ENCODE measurements at regions of chr10 and their contacts with region 1.

Region 1: DNA sequence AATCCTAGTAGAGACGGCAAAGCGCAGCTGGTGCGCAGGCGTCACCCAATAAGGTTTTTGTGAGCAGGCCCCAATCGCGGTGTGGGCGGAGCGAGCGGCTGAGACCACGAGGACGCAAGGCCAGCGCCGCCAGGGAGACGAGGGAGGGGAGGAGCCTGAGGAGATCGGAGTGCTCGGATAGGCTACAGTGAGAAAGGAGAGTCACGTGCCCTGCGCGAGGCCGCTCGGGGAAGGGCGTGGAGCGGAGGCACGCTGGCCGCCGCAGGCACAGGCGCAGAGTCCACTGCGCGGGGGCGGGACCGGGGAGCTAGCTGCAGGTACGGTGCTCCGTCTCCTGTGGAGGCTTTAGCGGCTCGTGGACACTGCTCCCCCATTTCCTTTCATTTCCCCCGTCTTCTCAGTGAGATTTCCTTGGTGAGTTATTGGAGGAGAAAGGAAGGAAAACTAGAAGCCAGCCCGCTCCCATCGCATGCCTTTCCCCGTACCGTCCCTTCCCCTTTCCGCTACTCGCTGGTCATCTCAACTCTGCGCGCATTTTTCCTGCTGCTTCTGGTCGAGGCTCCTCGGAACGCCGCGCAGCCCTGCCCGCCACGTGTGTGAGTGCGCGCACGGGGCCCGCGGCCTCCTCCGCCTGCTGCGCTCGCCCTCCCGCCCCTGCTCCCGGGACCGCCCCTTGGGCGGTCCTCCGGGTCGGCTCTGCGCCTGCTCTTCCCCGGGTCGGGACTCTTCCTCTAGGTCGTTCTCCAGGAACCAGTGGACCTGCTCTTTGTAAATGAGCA is at the start of gene THNSL1:
- DNase-seq: peak; percentile 99
- H3K4me3 Mint-ChIP-seq: peak within 1 kb of the TSS; percentile 88
- H3K27ac Mint-ChIP-seq: peak within 1 kb of the TSS; percentile 98
- H3K4me1 Mint-ChIP-seq: peaks cover 16% of the 10 kb centered on the region
- H3K27me3 Mint-ChIP-seq: peaks cover 12% of the 10 kb centered on the region
- total RNA-seq, gene THNSL1: 3.6 and 4.2 TPM in 2 replicates

Region 2: DNA sequence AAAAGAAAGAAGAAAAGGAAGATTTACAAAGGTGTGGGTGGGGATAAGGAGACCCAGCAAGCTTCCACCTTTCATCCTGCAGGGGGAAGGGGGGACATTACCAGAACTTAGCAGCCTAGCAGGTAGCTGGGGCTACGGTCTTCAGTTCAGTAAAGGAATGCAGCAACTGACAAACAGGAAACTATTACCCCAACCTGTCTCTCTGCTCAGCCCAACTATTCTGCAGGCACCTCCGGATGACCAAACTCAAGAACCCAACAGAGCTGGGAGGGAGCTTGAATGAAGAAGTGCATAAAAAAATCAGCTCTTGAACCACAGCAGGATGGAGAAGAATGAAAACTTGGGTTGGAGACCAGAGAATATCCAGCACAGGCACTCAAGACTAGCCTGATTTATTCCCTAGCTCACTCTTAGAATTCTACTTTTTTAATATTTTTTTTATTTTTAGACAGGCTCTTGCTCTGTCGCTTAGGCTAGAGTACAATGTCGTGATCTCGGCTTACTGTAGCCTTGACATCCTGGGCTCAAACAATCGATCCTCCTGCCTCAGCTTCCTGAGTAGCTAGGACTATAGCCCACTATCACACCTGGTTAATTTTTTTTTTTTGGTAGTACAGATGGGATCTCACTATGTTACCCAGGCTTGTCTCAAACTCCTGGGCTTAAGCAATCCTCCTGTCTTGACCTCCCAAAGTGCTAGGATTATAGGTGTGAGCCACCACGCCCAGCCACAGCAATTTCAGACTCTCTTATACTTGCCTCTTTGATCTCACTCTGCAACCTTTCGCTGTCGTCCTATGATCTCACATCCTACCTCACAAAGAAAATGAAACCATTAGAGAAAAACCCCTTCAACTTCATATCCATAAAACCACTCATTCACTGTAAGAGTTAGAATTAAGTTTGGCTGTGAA is 1653.4 kb before region 1 on chr10:
- intact Hi-C with region 1: loop called (anchors 2 kb)
- DNase-seq: peak; percentile 87
- H3K4me3 Mint-ChIP-seq: peak overlapping the region; percentile 72
- H3K27ac Mint-ChIP-seq: peak overlapping the region; percentile 94
- H3K4me1 Mint-ChIP-seq: peaks cover 50% of the 10 kb centered on the region
- H3K27me3 Mint-ChIP-seq: no peaks in the 10 kb centered on the region

Region 3: DNA sequence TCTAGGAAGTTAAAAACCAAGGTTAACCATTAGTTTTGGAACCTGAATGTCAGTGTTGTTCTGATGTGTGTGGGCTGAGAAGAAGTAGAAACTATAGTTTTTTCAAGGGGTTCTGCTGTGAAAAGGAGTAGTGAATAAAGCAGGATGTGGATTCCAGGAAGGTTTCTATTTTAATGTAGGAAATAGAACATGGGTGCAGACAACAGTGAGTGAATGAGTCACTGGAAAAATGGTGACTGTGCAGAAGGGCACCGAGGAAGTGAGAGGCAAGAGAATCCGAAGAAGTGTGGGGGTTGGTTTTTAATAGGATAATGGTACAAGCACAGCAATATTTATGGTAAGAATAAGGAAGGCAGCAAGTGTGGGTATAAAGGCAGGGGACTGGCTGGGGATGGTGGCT is 413.2 kb before region 1 on chr10:
- intact Hi-C with region 1: loop called (anchors 2 kb)
- DNase-seq: no peak
- H3K4me3 Mint-ChIP-seq: peak overlapping the region; percentile 32
- H3K27ac Mint-ChIP-seq: peak overlapping the region; percentile 85
- H3K4me1 Mint-ChIP-seq: peaks cover 27% of the 10 kb centered on the region
- H3K27me3 Mint-ChIP-seq: no peaks in the 10 kb centered on the region

Region 4: GRCh38 chr10:24724381-24725228 is 292.0 kb before region 1 on chr10:
- intact Hi-C with region 1: loop called (anchors 1 kb)
- DNase-seq: peak; percentile 99
- H3K4me3 Mint-ChIP-seq: peak overlapping the region; percentile 93
- H3K27ac Mint-ChIP-seq: peak overlapping the region; percentile 96
- H3K4me1 Mint-ChIP-seq: peaks cover 26% of the 10 kb centered on the region
- H3K27me3 Mint-ChIP-seq: no peaks in the 10 kb centered on the region

Region 5: GRCh38 chr10:24901686-24902399 is 114.7 kb before region 1 on chr10:
- intact Hi-C with region 1: loop called (anchors 5 kb)
- DNase-seq: no peak
- H3K4me3 Mint-ChIP-seq: peak overlapping the region; percentile 62
- H3K27ac Mint-ChIP-seq: peak overlapping the region; percentile 85
- H3K4me1 Mint-ChIP-seq: peaks cover 30% of the 10 kb centered on the region
- H3K27me3 Mint-ChIP-seq: no peaks in the 10 kb centered on the region

Region 6: DNA sequence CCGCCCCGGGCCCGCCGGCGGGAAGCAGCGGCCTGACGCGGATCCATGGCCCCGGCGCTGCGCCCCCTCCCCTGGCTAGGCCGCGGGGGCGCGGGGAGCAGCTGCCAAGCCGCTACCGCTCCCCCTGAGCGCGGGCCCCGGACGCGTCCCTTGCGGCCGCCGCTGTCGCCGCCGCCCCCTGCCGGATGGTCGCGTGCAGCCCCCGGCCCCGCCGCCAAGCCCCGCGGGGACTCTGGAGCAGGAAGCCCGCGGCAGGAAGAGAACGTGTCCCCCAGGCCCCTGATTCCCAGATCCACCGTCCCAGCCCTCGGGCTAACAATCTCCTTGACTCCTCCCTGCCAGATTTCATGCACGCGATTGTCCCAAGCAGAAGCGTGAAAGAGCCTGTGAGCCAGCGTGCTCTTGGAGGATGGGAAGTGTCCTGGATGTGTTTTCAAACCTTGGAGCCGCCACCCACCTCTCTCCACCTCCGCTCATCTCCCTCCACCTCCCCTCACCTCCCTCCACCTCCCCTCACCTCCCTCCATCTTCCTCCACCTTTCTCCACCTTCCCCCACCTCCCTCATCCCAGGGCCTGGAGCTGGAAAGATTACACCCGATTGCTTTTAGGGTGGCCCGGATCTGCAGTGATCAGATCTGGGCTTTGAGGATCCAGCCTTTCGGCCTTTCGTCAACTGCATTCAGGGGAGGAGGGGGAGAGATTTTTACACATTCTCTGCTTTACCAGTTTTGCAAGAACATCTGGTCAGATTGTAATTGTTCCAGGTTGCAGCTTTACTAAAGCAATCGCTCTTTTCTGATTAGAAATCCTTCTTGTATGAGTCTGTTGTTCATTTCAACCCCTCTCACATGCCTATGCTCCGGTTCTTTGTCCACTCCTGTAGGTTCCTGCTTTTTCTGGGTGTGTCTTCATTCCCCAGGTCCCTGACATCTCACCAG is 63.6 kb before region 1 on chr10:
- intact Hi-C with region 1: loop called (anchors 2 kb)
- DNase-seq: peak; percentile 85
- H3K4me3 Mint-ChIP-seq: peak overlapping the region; percentile 78
- H3K27ac Mint-ChIP-seq: peak overlapping the region; percentile 82
- H3K4me1 Mint-ChIP-seq: peaks cover 21% of the 10 kb centered on the region
- H3K27me3 Mint-ChIP-seq: peaks cover 2% of the 10 kb centered on the region

Region 7: GRCh38 chr10:24974976-24975375 is 41.6 kb before region 1 on chr10:
- intact Hi-C with region 1: no loop called
- DNase-seq: no peak
- H3K4me3 Mint-ChIP-seq: no peak overlapping the region
- H3K27ac Mint-ChIP-seq: no peak overlapping the region
- H3K4me1 Mint-ChIP-seq: no peaks in the 10 kb centered on the region
- H3K27me3 Mint-ChIP-seq: peaks cover 12% of the 10 kb centered on the region

Region 8: GRCh38 chr10:25080880-25081581 is 64.5 kb after region 1 on chr10:
- intact Hi-C with region 1: loop called (anchors 2 kb)
- DNase-seq: peak; percentile 89
- H3K4me3 Mint-ChIP-seq: no peak overlapping the region
- H3K27ac Mint-ChIP-seq: no peak overlapping the region
- H3K4me1 Mint-ChIP-seq: peaks cover 11% of the 10 kb centered on the region
- H3K27me3 Mint-ChIP-seq: peaks cover 18% of the 10 kb centered on the region